Heart right ventricle (tissue), 16 donors: ENCODE measurements at regions of chr5 and their contacts with region 1.

Region 1: GRCh38 chr5:55994574-55995333 is at the start of gene IL6ST:
- DNase-seq: peak; percentile 98
- ATAC-seq: peak; percentile 97 to 99 (median 99)
- H3K4me3 ChIP-seq: peak within 1 kb of the TSS; percentile 65 to 90 (median 80)
- H3K27ac ChIP-seq: peak within 1 kb of the TSS; percentile 92 to 100 (median 99)
- H3K4me1 ChIP-seq: peaks cover 0 to 57% (median 38%) of the 10 kb centered on the region in 9 donors
- H3K27me3 ChIP-seq: no peaks in the 10 kb centered on the region
- CTCF ChIP-seq: peak in 7 of 9 donors; percentile 22 to 54 (median 38)
- total RNA-seq, gene IL6ST: 99.9 to 190 (median 140) TPM

Region 2: DNA sequence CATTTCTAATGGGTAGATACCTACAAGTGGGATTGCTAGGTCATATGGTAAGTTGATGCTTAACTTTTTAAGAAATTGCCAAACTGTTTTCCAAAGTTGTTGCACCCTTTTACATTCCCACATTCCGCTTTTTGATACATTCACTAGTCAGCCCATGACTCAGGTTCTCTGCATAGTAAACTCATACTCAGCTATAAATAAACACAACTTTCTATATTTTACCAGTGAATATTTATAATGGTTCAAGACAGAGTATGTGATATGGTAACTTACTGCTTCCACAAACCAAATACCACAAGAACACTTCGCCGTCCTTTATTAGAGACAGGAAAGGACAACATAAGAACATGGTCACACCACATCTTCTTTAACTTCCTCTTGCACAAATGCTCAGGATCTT is 514.0 kb before region 1 on chr5:
- intact Hi-C with region 1: no loop called
- DNase-seq: no peak
- ATAC-seq: no peak
- H3K4me3 ChIP-seq: no peak overlapping the region
- H3K27ac ChIP-seq: no peak overlapping the region
- H3K4me1 ChIP-seq: peaks cover 0 to 57% (median 17%) of the 10 kb centered on the region in 9 donors
- H3K27me3 ChIP-seq: no peaks in the 10 kb centered on the region
- CTCF ChIP-seq: no peak

Region 3: DNA sequence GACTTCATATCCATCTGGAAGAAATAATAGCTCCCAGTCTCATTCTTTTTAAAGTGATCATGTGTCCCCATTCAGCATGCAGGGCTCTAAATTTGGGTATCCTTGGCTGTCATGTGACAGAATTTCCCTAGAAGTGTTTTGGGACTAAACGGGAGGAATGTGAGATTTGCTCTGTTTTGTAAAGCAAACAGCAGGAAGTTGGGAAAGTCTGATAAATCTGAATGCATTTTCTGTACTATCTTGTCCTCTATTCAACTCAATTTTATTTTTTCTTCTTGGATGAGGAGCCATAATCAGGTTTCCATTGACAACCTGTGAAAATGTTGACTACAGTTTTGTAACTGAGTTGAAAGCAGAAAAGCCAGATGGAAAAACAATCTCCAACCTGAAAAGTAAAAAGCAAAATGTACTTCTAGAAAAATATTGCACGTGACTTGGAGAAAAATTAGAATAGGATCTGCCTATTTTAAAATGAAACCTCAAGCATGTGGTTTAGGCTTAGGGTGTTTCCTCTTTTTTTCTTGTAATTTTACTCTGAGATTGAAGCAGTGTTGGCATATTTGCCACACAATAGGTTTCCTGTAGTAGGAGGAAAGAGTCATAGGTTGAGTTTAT is 76.2 kb after region 1 on chr5:
- intact Hi-C with region 1: loop called in 1 of 10 experiments (anchors 5 kb)
- DNase-seq: no peak
- ATAC-seq: peak in 6 of 8 donors; percentile 42 to 79 (median 56)
- H3K4me3 ChIP-seq: peak overlapping the region in 3 of 10 donors; percentile 1 to 6 (median 1)
- H3K27ac ChIP-seq: peak overlapping the region; percentile 17 to 79 (median 65)
- H3K4me1 ChIP-seq: peaks cover 0 to 52% (median 38%) of the 10 kb centered on the region in 9 donors
- H3K27me3 ChIP-seq: no peaks in the 10 kb centered on the region
- CTCF ChIP-seq: no peak

Region 4: GRCh38 chr5:56175488-56175887 is 180.7 kb after region 1 on chr5:
- intact Hi-C with region 1: loop called in 3 of 10 experiments (anchors 5 to 10 kb)
- DNase-seq: peak in 1 of 2 donors; percentile 46
- ATAC-seq: peak; percentile 65 to 86 (median 76)
- H3K4me3 ChIP-seq: no peak overlapping the region
- H3K27ac ChIP-seq: peak overlapping the region in 8 of 10 donors; percentile 0 to 62 (median 25)
- H3K4me1 ChIP-seq: peaks cover 0 to 68% (median 41%) of the 10 kb centered on the region in 9 donors
- H3K27me3 ChIP-seq: no peaks in the 10 kb centered on the region
- CTCF ChIP-seq: no peak

Region 5: DNA sequence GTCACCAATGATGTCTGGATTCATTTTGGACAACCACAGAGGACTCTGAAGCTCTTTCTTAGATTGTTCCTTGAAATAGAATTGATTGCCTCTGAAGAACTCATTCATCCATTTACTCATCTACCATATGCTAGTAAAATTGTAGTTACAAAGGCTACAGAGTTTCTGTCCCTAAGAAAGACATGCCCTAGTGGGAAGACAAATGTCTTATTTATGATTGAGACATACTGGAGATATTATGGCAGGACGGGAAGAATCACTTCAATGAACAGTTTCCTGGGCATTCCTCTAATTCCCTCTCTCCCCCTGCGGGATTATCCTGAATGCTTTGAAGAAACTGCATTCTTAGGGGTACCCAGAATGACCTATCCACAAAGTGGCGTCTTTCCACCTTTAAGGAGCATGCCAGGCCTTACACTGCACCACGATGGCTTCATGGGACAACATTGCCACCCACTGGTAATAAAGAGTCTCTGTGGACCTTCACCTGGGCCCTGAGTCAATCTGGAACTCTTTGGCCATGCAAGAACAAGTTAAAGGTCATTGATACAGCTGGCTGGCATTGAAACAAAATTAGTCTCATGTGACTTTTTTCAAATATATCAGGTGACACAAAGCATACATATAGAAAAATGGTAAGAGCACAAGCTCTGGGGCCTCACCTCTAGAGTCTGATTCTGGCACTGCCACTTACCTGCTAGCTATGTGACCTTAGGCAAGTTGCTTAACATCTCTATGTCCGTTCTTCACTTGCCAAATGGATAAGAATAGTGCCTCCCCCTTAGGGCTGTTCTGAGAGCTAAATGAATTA is 206.3 kb after region 1 on chr5:
- intact Hi-C with region 1: loop called in 3 of 10 experiments (anchors 2 to 5 kb)
- DNase-seq: peak in 1 of 2 donors; percentile 62
- ATAC-seq: peak; percentile 94 to 100 (median 98)
- H3K4me3 ChIP-seq: no peak overlapping the region
- H3K27ac ChIP-seq: no peak overlapping the region
- H3K4me1 ChIP-seq: peaks cover 0 to 12% (median 6%) of the 10 kb centered on the region in 9 donors
- H3K27me3 ChIP-seq: no peaks in the 10 kb centered on the region
- CTCF ChIP-seq: peak; percentile 67 to 92 (median 82)